ENCODE measurements at regions of chr18 and their contacts with region 1.

Region 1: GRCh38 chr18:68660354-68661183 is 54.3 kb downstream of the TMX3 start:
- DNase-seq: no peak
- H3K4me3 Mint-ChIP-seq: no peak overlapping the region
- H3K27ac Mint-ChIP-seq: no peak overlapping the region
- H3K4me1 Mint-ChIP-seq: no peaks in the 10 kb centered on the region
- H3K27me3 Mint-ChIP-seq: no peaks in the 10 kb centered on the region

Region 2: GRCh38 chr18:68648191-68648590 is 12.4 kb before region 1 on chr18:
- CTCF ChIA-PET with region 1: interaction called, 14 read pairs
- DNase-seq: no peak
- H3K4me3 Mint-ChIP-seq: no peak overlapping the region
- H3K27ac Mint-ChIP-seq: no peak overlapping the region
- H3K4me1 Mint-ChIP-seq: no peaks in the 10 kb centered on the region
- H3K27me3 Mint-ChIP-seq: peaks cover 16% of the 10 kb centered on the region

Measured in activated naive CD4-positive, alpha-beta T cell treated with anti-CD3 and anti-CD28 coated beads, Interleukin-2, amount 10 ng/mL, durations not matched to agents 7 days and 5 days (primary cell).